ENCODE measurements at regions of chr15 and their contacts with region 1.

Region 1: GRCh38 chr15:65980824-65981456 is 111.6 kb downstream of the RAB11A start:
- DNase-seq: peak; percentile 66
- H3K4me3 ChIP-seq: no peak overlapping the region; a peak in 1 of 4 replicates
- H3K27ac ChIP-seq: no peak overlapping the region
- H3K4me1 ChIP-seq: peaks cover 0 to 11% of the 10 kb centered on the region in 2 experiments; a peak in 1 of 4 replicates
- H3K27me3 ChIP-seq: no peaks in the 10 kb centered on the region; the same call in 1 of the 2 replicates
- CTCF ChIP-seq: peak; percentile 67
- EP300 ChIP-seq: no peak
- RAD21 ChIP-seq: peak; percentile 73

Region 2: DNA sequence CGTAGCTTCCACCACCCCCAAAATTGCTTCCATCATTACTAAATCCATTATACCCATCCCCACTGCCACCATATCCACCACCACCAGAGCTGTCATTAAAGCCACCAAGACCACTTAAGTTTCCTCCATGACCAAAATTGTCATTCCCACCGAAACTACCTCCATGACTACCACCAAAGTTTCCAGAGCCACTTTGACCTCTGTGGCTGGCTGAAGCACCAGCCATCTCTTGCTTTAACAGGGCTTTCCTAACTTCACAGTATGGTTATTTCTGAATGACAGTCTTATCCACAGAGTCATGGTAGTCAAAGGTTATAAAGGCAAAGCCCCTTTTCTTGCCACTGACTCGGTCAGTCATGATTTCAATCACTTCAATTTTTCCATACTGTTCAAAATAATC is 164.5 kb before region 1 on chr15:
- CTCF ChIA-PET with region 1: no interaction called
- POLR2A ChIA-PET with region 1: no interaction called
- DNase-seq: no peak
- H3K4me3 ChIP-seq: no peak overlapping the region
- H3K27ac ChIP-seq: no peak overlapping the region
- H3K4me1 ChIP-seq: no peaks in the 10 kb centered on the region; a peak in 1 of 4 replicates
- H3K27me3 ChIP-seq: no peaks in the 10 kb centered on the region
- CTCF ChIP-seq: no peak
- EP300 ChIP-seq: no peak
- RAD21 ChIP-seq: no peak

Region 3: GRCh38 chr15:65906396-65906795 is 74.5 kb before region 1 on chr15:
- CTCF ChIA-PET with region 1: no interaction called
- POLR2A ChIA-PET with region 1: no interaction called
- DNase-seq: no peak
- H3K4me3 ChIP-seq: no peak overlapping the region
- H3K27ac ChIP-seq: no peak overlapping the region
- H3K4me1 ChIP-seq: no peaks in the 10 kb centered on the region; a peak in 1 of 4 replicates
- H3K27me3 ChIP-seq: no peaks in the 10 kb centered on the region
- CTCF ChIP-seq: no peak
- EP300 ChIP-seq: no peak
- RAD21 ChIP-seq: no peak

Region 4: GRCh38 chr15:65993236-65993635 is 12.3 kb after region 1 on chr15:
- CTCF ChIA-PET with region 1: interaction called, 13 read pairs
- POLR2A ChIA-PET with region 1: interaction called, 4 read pairs
- DNase-seq: peak; percentile 53
- H3K4me3 ChIP-seq: no peak overlapping the region
- H3K27ac ChIP-seq: no peak overlapping the region; a peak in 1 of 4 replicates
- H3K4me1 ChIP-seq: peaks cover 0 to 30% of the 10 kb centered on the region in 2 experiments; a peak in 1 of 4 replicates
- H3K27me3 ChIP-seq: peaks cover 16% of the 10 kb centered on the region; the same call in 1 of the 2 replicates
- CTCF ChIP-seq: no peak
- EP300 ChIP-seq: no peak
- RAD21 ChIP-seq: no peak

Region 5: DNA sequence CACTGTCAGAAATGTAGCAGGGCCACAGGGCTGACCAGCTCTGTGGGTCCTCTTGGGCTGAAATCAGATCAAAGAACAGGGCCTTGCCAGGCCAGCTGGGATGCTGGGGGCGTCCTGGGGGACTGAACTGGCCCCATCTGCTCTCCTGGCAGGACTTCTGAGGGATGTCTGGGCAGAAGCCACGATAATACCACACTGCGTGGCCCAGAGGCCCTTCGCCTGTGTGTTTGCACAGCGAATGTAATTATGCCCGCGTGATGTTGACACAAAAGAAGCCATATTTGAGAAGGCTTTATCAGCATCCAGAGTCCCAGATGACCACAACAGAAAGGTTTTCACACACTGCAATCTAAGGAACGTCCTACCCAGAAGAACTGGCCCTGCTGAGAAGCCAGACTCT is 62.3 kb after region 1 on chr15:
- CTCF ChIA-PET with region 1: no interaction called
- POLR2A ChIA-PET with region 1: no interaction called
- DNase-seq: no peak
- H3K4me3 ChIP-seq: no peak overlapping the region
- H3K27ac ChIP-seq: no peak overlapping the region
- H3K4me1 ChIP-seq: peaks cover 0 to 15% of the 10 kb centered on the region in 2 experiments; a peak in 1 of 4 replicates
- H3K27me3 ChIP-seq: no peaks in the 10 kb centered on the region; the same call in 1 of the 2 replicates
- CTCF ChIP-seq: no peak
- EP300 ChIP-seq: no peak
- RAD21 ChIP-seq: no peak

Region 6: GRCh38 chr15:66386204-66387123 is 405.5 kb after region 1 on chr15 and contains the start of gene MAP2K1:
- CTCF ChIA-PET with region 1: no interaction called
- POLR2A ChIA-PET with region 1: no interaction called
- DNase-seq: peak; percentile 99
- H3K4me3 ChIP-seq: peak within 1 kb of the TSS; percentile 74 to 92
- H3K27ac ChIP-seq: peak within 1 kb of the TSS; percentile 74 to 78
- H3K4me1 ChIP-seq: peaks cover 6 to 9% of the 10 kb centered on the region in 2 experiments; a peak in 3 of 4 replicates
- H3K27me3 ChIP-seq: no peaks in the 10 kb centered on the region
- CTCF ChIP-seq: peak; percentile 75
- EP300 ChIP-seq: no peak
- RAD21 ChIP-seq: peak; percentile 21; the same call in 1 of the 2 replicates
- polyA plus RNA-seq, gene MAP2K1: 21.8 and 25.5 TPM in 2 replicates

Measured in SK-N-SH (cell line).